HEK293T (cell line): ENCODE measurements at regions of chr2 and their contacts with region 1.

Region 1: DNA sequence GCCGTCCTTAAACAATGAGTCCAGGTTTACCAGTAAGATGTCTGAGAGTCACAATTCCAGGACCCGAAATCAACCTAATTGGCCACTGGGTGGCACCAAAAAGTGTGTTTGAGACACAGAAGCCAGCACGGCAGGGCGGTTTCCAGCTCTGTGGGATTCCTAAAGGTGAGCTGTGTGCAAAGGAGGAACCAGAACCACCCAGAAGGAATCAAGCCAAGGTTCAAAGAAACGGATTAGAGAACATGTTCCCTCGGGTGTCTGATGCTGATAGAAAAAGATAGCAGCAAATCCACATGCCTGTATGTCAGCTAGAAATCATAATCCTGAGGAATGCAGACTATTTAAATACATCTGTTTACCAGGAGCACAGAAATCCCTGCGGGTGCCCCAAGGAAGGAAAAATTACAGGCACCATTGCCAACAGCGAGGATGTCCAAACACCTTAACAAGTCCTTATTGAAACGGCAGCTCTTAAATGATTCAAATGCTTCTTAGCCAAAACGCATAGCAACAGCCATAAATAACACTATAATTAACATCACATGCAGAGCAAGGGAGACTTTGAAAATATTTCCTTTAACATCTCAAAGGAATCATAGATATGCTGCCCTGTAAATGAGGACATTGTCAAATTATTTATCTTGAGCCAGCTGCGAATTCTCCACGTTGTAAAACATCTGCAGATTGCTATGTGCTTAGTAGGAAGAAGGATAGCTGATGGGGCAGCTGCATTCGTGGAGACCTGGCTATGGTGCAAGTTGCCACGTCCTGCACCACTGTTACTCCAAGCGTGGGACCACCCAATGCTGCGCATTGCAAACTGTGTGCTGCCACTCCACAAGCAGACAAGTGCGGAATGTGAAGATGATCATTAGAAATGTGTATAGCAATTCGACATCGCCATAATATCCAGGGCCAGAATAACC is 318.7 kb upstream of the NCKAP5 start:
- DNase-seq: peak; percentile 75

Region 2: DNA sequence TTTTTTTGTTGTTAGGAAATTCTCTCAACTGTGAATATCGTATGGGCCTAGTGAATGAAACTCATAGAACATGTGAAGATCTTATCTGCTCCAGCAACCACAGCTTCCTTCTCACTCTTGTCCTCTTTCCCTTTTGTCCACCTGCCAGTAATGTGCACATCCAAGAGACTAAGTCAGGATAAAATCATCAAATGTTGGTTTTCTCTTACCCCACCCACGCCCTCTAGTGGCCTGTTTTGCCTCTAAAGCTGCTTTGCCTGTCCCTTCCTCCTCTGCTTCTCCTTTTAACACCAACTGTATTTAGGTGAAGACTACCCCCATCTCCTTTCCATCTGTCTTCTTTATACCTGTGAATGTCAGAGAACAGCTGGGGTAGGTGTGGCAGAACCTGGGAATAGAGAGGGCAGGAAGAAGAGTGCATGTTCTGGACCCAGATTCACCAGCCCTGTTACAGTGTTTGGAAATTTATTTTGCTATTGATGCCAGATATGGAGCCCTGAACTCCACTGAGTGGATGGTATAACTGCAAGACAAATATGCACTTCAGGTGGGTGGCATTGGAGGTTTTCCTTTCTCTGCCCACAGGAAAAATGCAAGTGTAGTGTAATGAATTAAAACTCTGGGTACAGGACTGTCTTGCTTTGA is 358.5 kb after region 1 on chr2:
- CTCF ChIA-PET with region 1: interaction called, 11 read pairs
- POLR2A ChIA-PET with region 1: no interaction called
- DNase-seq: peak; percentile 45